PC-9 (cell line): ENCODE measurements at regions of chr14 and their contacts with region 1.

Region 1: DNA sequence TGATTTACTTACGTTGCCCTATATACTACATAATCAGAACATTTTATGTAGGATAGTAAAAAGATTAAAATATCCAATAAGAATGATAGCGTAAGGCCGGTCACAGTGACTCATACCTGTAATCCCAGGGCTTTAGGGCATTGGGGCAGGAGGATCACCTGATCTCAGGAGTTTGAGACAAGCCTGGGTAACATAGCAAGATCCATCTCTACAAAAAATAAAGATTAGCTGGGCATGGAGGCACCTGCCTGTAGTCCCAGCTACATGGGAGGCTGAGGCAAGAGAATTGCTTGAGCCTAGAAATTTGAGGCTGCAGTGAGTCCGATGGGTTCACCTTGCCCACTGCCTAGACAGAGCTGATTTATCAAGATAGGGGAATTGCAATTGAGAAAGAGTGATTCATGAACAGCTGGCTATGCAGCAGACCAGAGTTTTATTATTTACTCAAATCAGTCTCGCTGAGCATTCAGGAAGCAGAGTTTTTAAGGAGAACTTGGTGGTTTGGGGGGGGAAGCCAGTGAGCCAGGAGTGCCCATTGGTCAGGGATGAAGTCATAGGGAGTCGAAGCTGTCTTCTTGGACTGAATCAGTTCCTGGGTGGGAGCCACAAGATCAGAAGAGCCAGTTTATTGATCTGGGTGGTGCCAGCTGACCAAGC is 24.8 kb upstream of the SGPP1 start:
- DNase-seq: peak; percentile 68 to 98
- H3K4me3 ChIP-seq: peak overlapping the region; percentile 49
- H3K27ac ChIP-seq: peak overlapping the region; percentile 66
- H3K4me1 ChIP-seq: peaks cover 20% of the 10 kb centered on the region
- H3K27me3 ChIP-seq: no peaks in the 10 kb centered on the region
- CTCF ChIP-seq: no peak

Region 2: GRCh38 chr14:63777024-63777423 is 24.4 kb after region 1 on chr14:
- CTCF ChIA-PET with region 1: interaction called, 8 read pairs
- POLR2A ChIA-PET with region 1: no interaction called
- intact Hi-C with region 1: loop called (anchors 1 kb)
- DNase-seq: peak in 1 of 2 experiments; percentile 78
- H3K4me3 ChIP-seq: no peak overlapping the region
- H3K27ac ChIP-seq: peak overlapping the region; percentile 46
- H3K4me1 ChIP-seq: peaks cover 24% of the 10 kb centered on the region
- H3K27me3 ChIP-seq: no peaks in the 10 kb centered on the region
- CTCF ChIP-seq: no peak